H1 (cell line): ENCODE measurements at regions of chr12 and their contacts with region 1.

Region 1: DNA sequence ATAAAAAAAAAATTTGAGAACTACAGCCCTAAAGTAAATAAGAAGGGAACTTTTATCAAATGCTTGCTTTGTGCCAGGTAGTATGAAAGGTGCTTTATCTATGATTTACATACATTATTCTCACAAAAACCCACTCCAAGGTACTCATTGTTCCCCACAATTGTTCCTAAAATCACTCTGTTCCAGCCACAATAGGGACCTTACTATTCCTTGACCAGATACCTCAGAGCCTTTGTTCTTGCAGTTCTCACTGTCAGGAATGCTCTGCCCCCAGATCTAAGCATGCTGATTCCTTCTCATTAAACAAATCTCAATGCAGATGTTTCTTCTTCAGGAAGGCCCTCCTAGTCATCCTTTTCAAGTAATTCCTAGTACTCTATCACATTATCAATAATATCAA is 60.2 kb downstream of the PPP1R12A start:
- DNase-seq: peak in 1 of 2 experiments; percentile 13
- H3K4me3 ChIP-seq: no peak overlapping the region
- H3K27ac ChIP-seq: no peak overlapping the region
- H3K4me1 ChIP-seq: peaks cover 0 to 7% (median 3%) of the 10 kb centered on the region in 4 experiments; a peak in 5 of 7 replicates
- H3K27me3 ChIP-seq: no peaks in the 10 kb centered on the region
- CTCF ChIP-seq: no peak
- EP300 ChIP-seq: no peak
- POLR2A ChIP-seq: no peak
- RAD21 ChIP-seq: no peak

Region 2: GRCh38 chr12:79887912-79888311 is 13.2 kb after region 1 on chr12:
- CTCF ChIA-PET with region 1: interaction called, 11 read pairs
- POLR2A ChIA-PET with region 1: interaction called, 3 read pairs
- DNase-seq: no peak
- H3K4me3 ChIP-seq: no peak overlapping the region
- H3K27ac ChIP-seq: no peak overlapping the region
- H3K4me1 ChIP-seq: peaks cover 0 to 3% (median 0%) of the 10 kb centered on the region in 4 experiments; a peak in 3 of 7 replicates
- H3K27me3 ChIP-seq: no peaks in the 10 kb centered on the region
- CTCF ChIP-seq: no peak
- EP300 ChIP-seq: no peak
- POLR2A ChIP-seq: no peak
- RAD21 ChIP-seq: no peak